ENCODE measurements at regions of chr11 and their contacts with region 1.

Region 1: GRCh38 chr11:96342961-96343711 is at the start of gene MAML2:
- DNase-seq: peak; percentile 93 to 96 (median 94)
- ATAC-seq: peak; percentile 89
- H3K4me3 ChIP-seq: peak within 1 kb of the TSS; percentile 70
- H3K27ac ChIP-seq: peak within 1 kb of the TSS; percentile 59
- H3K4me1 ChIP-seq: peaks cover 22 to 34% of the 10 kb centered on the region in 2 experiments
- H3K27me3 ChIP-seq: no peaks in the 10 kb centered on the region
- CTCF ChIP-seq: peak; percentile 85 to 99 (median 98)
- EP300 ChIP-seq: peak; percentile 54; the same call in 1 of the 2 replicates
- POLR2A ChIP-seq: no peak
- RAD21 ChIP-seq: peak; percentile 94
- polyA plus RNA-seq, gene MAML2: 0.79 to 1.5 TPM

Region 2: GRCh38 chr11:95835768-95836488 is 507.2 kb before region 1 on chr11:
- CTCF ChIA-PET with region 1: interaction called, 6 read pairs
- POLR2A ChIA-PET with region 1: interaction called, 3 read pairs
- in situ Hi-C with region 1: no loop called
- intact Hi-C with region 1: loop called (anchors 2 kb)
- DNase-seq: peak; percentile 49 to 80 (median 64)
- ATAC-seq: peak; percentile 98
- H3K4me3 ChIP-seq: no peak overlapping the region
- H3K27ac ChIP-seq: no peak overlapping the region
- H3K4me1 ChIP-seq: no peaks in the 10 kb centered on the region
- H3K27me3 ChIP-seq: no peaks in the 10 kb centered on the region
- CTCF ChIP-seq: peak; percentile 81 to 88 (median 88)
- EP300 ChIP-seq: no peak
- POLR2A ChIP-seq: no peak
- RAD21 ChIP-seq: peak; percentile 75 to 85

Region 3: GRCh38 chr11:96054870-96055705 is 288.0 kb before region 1 on chr11:
- CTCF ChIA-PET with region 1: interaction called, 41 read pairs
- POLR2A ChIA-PET with region 1: no interaction called
- in situ Hi-C with region 1: no loop called
- intact Hi-C with region 1: loop called (anchors 1 kb)
- DNase-seq: peak; percentile 28 to 43 (median 32)
- ATAC-seq: peak; percentile 88
- H3K4me3 ChIP-seq: no peak overlapping the region
- H3K27ac ChIP-seq: no peak overlapping the region
- H3K4me1 ChIP-seq: no peaks in the 10 kb centered on the region; a peak in 1 of 5 replicates
- H3K27me3 ChIP-seq: no peaks in the 10 kb centered on the region
- CTCF ChIP-seq: peak; percentile 45 to 75 (median 57); a peak in 4 of 6 replicates
- EP300 ChIP-seq: no peak
- POLR2A ChIP-seq: no peak
- RAD21 ChIP-seq: peak; percentile 82 to 92

Region 4: DNA sequence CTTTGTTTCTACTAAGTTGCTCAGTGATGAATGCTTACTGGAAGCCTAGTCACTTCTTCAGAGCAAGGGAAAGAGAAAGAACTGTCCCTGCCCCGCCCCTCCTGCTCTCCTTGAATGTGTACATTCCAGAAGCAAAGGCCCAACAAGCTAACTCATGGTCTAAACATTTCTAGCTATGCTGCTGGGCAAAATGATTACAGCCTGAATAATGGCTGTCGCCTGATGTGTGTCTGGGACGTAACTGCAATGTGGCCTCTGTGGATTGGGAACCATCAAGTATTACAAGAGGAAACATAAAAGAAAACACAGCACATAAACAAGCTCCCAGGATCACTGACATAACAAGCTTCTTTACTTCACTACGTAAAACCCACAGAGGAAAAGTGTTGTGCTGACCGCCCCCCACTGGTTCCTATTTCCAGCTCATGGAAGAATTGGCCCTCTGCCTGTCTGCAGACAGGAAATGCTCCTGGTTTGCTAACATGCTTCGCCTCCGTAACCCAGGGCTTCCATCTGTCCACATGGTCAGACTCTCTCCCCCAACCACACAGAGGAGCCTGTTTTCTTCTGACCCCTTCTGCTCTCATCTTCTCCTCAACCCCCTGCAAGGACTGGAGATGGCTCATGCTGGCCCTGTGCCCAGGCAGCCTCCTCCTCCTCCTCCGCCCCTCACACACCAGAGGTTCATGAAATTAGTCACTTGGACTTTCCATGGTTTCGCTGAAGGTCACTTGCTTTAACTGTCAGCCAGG is 187.3 kb before region 1 on chr11:
- CTCF ChIA-PET with region 1: interaction called, 3 read pairs
- POLR2A ChIA-PET with region 1: interaction called, 3 read pairs
- in situ Hi-C with region 1: no loop called
- intact Hi-C with region 1: loop called (anchors 1 kb)
- DNase-seq: peak; percentile 66 to 87 (median 76)
- ATAC-seq: peak; percentile 86
- H3K4me3 ChIP-seq: no peak overlapping the region
- H3K27ac ChIP-seq: peak overlapping the region; percentile 87
- H3K4me1 ChIP-seq: peaks cover 12 to 36% of the 10 kb centered on the region in 2 experiments; a peak in 4 of 5 replicates
- H3K27me3 ChIP-seq: no peaks in the 10 kb centered on the region
- CTCF ChIP-seq: peak; percentile 51 to 64 (median 53)
- EP300 ChIP-seq: 0 out of 2 replicates have a peak, but pooled peaks have one; percentile 4
- POLR2A ChIP-seq: no peak; the same call in 1 of the 2 replicates
- RAD21 ChIP-seq: peak; percentile 59 to 70

Region 5: GRCh38 chr11:96254087-96254486 is 89.0 kb before region 1 on chr11:
- CTCF ChIA-PET with region 1: no interaction called
- POLR2A ChIA-PET with region 1: no interaction called
- in situ Hi-C with region 1: no loop called
- intact Hi-C with region 1: loop called (anchors 2 kb)
- DNase-seq: no peak
- ATAC-seq: no peak
- H3K4me3 ChIP-seq: no peak overlapping the region
- H3K27ac ChIP-seq: no peak overlapping the region
- H3K4me1 ChIP-seq: peaks cover 12 to 39% of the 10 kb centered on the region in 2 experiments
- H3K27me3 ChIP-seq: no peaks in the 10 kb centered on the region
- CTCF ChIP-seq: no peak
- EP300 ChIP-seq: no peak
- POLR2A ChIP-seq: no peak
- RAD21 ChIP-seq: no peak

Region 6: GRCh38 chr11:96324960-96325359 is 18.2 kb before region 1 on chr11:
- CTCF ChIA-PET with region 1: interaction called, 3 read pairs
- POLR2A ChIA-PET with region 1: interaction called, 20 read pairs
- in situ Hi-C with region 1: no loop called
- intact Hi-C with region 1: loop called (anchors 1 kb)
- DNase-seq: no peak
- ATAC-seq: no peak
- H3K4me3 ChIP-seq: no peak overlapping the region
- H3K27ac ChIP-seq: peak overlapping the region; percentile 52; the same call in 2 of the 3 replicates
- H3K4me1 ChIP-seq: peaks cover 18 to 73% of the 10 kb centered on the region in 2 experiments; a peak in 4 of 5 replicates
- H3K27me3 ChIP-seq: no peaks in the 10 kb centered on the region
- CTCF ChIP-seq: no peak
- EP300 ChIP-seq: no peak
- POLR2A ChIP-seq: no peak
- RAD21 ChIP-seq: no peak

Measured in K562 (cell line).